Activated T-helper 1 cell treated with anti-CD3 and anti-CD28 coated beads, Interleukin-12 subunit alpha, Interleukin-12 subunit beta, Interleukin-2, Interleukin-4 antibody, amounts not matched to agents 30 ng/mL and 10 ng/mL and 1 ng/mL, durations not matched to agents 14 hours and 24 hours and 36 hours (primary cell): ENCODE measurements at regions of chr22 and their contacts with region 1.

Region 1: GRCh38 chr22:42369245-42370041 is 62.8 kb downstream of the NFAM1 start:
- DNase-seq: peak; percentile 82
- H3K4me3 Mint-ChIP-seq: peak overlapping the region; percentile 85
- H3K27ac Mint-ChIP-seq: peak overlapping the region; percentile 30
- H3K4me1 Mint-ChIP-seq: peaks cover 7% of the 10 kb centered on the region
- H3K27me3 Mint-ChIP-seq: peaks cover 40% of the 10 kb centered on the region

Region 2: DNA sequence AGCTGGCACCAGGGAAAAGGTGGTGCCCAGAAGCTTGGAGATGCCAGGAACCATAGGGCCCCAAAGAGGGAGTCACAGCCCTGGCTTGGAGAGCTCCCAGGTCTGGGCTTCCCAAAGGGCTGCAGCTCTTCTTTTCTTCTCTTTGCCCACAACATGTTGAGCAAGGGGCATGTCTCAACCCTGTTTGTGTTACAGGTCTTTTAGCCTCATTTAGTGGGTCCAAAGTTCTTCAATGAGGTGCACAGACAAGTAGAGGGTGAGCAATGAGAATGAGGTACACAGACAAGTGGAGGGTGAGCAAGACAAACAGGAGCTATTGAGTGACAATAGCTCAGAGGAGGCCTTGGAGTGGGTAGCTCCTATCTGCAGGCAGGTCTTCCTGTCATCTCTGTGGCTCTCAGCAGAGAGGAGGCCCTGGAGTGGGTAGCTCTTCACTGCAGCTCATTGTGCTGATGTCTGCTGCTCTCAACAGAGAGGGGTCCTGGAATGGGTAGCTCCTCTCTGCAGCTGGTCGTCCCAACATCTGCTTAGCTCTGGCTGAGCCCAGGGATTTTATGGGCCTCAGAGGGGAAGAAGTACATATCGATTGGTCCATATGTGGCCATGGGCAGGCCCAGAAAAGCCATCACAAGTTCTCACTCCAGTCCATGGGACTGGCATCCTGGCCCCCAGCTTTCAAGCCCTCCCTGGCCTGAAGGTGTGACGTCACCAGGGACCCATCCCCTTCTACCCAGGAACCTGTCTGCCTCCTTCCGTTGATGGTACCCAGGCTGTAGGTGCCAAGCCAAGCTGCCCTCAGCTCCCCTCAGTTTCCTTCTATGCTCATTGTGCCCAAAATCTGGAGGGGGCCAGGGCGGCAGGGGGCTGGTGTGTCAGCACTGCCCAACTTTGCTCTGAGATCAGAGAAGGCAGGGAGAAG is 335.9 kb before region 1 on chr22:
- intact Hi-C with region 1: loop called (anchors 1 kb)
- DNase-seq: no peak
- H3K4me3 Mint-ChIP-seq: no peak overlapping the region
- H3K27ac Mint-ChIP-seq: no peak overlapping the region
- H3K4me1 Mint-ChIP-seq: peaks cover 40% of the 10 kb centered on the region
- H3K27me3 Mint-ChIP-seq: peaks cover 4% of the 10 kb centered on the region

Region 3: GRCh38 chr22:42269407-42270177 is 99.9 kb before region 1 on chr22:
- intact Hi-C with region 1: loop called (anchors 1 kb)
- DNase-seq: peak; percentile 67
- H3K4me3 Mint-ChIP-seq: peak overlapping the region; percentile 90
- H3K27ac Mint-ChIP-seq: peak overlapping the region; percentile 87
- H3K4me1 Mint-ChIP-seq: peaks cover 37% of the 10 kb centered on the region
- H3K27me3 Mint-ChIP-seq: no peaks in the 10 kb centered on the region

Region 4: DNA sequence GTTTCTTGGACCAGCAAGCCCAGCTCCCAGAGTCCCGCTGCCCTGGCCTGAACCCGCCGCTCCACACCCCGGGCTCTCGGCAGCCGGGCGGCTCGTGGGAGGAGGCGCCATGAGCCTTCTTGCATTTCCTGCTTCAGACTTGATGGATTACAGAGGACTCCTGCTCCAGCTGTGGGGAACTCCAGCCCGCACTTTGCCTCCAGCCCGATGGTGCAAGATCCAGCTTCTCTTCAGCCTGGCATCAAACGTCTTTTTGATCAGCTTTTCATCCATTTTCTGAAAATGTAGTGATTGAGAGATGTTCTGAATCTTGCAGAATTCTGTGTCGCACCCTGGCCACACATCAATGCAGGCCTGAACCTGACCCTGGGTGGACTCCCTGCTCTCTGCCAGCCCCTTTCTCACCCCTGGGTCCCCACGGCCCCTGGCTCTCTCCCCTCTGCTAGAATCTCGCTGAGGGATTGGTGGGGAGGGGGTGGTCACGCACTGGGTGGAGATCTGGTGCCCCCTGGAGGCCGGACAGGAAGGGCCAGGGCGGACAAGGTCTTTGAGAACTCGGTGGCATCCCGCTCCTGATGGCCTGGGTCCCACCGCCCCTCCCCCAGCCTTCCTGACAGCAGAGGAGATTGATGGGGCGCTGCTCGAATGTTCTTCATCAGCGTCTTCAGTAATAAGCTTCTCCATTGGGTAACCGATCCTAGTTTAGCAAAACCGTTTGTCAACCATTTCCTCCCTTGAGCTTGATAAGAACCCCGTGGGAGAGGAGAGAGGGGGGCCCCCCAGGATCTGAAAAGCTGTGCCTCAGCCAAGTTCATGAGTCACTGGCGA is 74.8 kb after region 1 on chr22:
- intact Hi-C with region 1: loop called (anchors 1 kb)
- DNase-seq: peak; percentile 76
- H3K4me3 Mint-ChIP-seq: peak overlapping the region; percentile 68
- H3K27ac Mint-ChIP-seq: peak overlapping the region; percentile 78
- H3K4me1 Mint-ChIP-seq: peaks cover 35% of the 10 kb centered on the region
- H3K27me3 Mint-ChIP-seq: peaks cover 5% of the 10 kb centered on the region